CD8-positive, alpha-beta T cell (primary cell): ENCODE measurements at regions of chr19 and their contacts with region 1.

Region 1: DNA sequence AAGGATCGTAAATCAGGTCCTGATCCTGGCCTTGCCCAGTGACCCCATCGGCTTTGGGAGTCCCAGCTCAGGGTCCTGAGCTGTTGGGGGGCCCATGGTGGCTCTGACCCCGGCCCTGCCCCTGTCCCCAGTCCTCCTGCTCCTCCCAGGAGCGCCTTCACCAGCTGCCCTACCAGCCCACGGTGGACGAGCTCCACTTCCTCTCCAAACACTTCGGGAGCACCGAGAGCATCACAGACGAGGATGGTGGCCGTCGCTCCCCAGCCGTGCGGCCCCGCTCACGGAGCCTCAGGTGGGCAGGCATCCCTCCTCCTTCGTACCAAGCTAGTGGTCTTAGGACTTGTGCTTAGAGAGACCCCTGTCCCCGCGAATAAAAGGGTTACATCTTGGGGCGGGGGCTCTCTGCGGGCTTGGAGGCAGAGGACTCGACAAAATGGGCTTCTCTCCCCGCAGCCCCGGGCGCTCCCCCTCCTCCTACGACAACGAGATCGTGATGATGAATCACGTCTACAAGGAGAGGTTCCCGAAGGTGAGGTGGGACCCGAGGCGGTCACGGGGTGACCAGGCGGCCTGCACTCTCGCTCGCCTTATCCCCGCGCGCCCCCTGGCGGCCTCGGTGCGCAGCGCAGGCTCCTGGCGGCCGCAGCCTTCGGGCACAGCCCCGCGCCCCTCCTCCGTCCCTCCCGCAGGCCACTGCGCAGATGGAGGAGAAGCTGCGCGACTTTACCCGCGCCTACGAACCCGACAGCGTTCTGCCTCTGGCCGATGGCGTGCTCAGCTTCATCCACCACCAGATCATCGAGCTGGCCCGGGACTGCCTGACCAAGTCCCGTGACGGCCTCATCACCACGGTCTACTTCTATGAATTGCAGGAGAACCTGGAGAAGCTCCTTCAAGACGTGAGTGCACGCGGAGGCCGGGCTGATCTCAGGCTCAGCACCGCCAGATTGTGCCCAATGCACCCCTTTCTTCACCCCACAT is 9.1 kb downstream of the MAST1 start:
- DNase-seq: peak; percentile 66 to 90 (median 83)
- ATAC-seq: peak; percentile 96
- H3K4me3 ChIP-seq: peak overlapping the region; percentile 20 to 25
- H3K4me3 Mint-ChIP-seq: peak overlapping the region; percentile 22
- H3K27ac ChIP-seq: no peak overlapping the region
- H3K27ac Mint-ChIP-seq: no peak overlapping the region
- H3K4me1 ChIP-seq: peaks cover 4% of the 10 kb centered on the region
- H3K4me1 Mint-ChIP-seq: peaks cover 3% of the 10 kb centered on the region
- H3K27me3 ChIP-seq: peaks cover 0 to 9% of the 10 kb centered on the region in 2 experiments
- H3K27me3 Mint-ChIP-seq: peaks cover 37% of the 10 kb centered on the region
- CTCF ChIP-seq: peak; percentile 99

Region 2: DNA sequence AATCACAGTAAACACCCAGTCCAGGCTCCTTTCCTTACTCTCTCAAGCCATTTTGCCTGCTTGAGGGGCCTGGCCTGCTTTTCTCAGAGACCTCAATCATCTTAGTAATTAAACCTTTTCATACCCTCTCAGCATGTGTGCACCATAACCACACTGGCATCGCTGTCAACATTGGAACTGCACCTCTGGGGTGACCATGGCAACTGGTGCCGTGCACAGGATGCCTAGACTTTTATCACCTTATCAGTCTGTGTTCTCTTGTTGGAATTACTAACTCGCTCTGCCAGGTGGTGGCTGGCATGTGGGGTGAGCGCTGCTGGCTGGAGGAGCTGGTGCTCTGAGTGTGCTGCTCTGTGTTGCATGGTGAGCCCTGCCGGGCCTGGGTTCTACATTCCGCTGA is 345.3 kb before region 1 on chr19:
- CTCF ChIA-PET with region 1: no interaction called
- POLR2A ChIA-PET with region 1: no interaction called
- intact Hi-C with region 1: no loop called
- DNase-seq: no peak
- ATAC-seq: no peak
- H3K4me3 ChIP-seq: no peak overlapping the region
- H3K4me3 Mint-ChIP-seq: no peak overlapping the region
- H3K27ac ChIP-seq: no peak overlapping the region
- H3K27ac Mint-ChIP-seq: peak overlapping the region; percentile 14
- H3K4me1 ChIP-seq: no peaks in the 10 kb centered on the region
- H3K4me1 Mint-ChIP-seq: peaks cover under 1% of the 10 kb centered on the region
- H3K27me3 ChIP-seq: no peaks in the 10 kb centered on the region
- H3K27me3 Mint-ChIP-seq: no peaks in the 10 kb centered on the region
- CTCF ChIP-seq: no peak

Region 3: GRCh38 chr19:12757544-12758274 is 89.7 kb before region 1 on chr19:
- CTCF ChIA-PET with region 1: interaction called, 273 read pairs
- POLR2A ChIA-PET with region 1: interaction called, 3 read pairs
- intact Hi-C with region 1: loop called (anchors 1 kb)
- DNase-seq: peak; percentile 32 to 74 (median 49)
- ATAC-seq: peak; percentile 78
- H3K4me3 ChIP-seq: no peak overlapping the region
- H3K4me3 Mint-ChIP-seq: peak overlapping the region; percentile 18
- H3K27ac ChIP-seq: no peak overlapping the region
- H3K27ac Mint-ChIP-seq: no peak overlapping the region
- H3K4me1 ChIP-seq: peaks cover 7% of the 10 kb centered on the region
- H3K4me1 Mint-ChIP-seq: peaks cover 6% of the 10 kb centered on the region
- H3K27me3 ChIP-seq: peaks cover 3 to 4% of the 10 kb centered on the region in 2 experiments
- H3K27me3 Mint-ChIP-seq: peaks cover 16% of the 10 kb centered on the region
- CTCF ChIP-seq: peak; percentile 93

Region 4: GRCh38 chr19:12796146-12797071 is 51.0 kb before region 1 on chr19:
- CTCF ChIA-PET with region 1: interaction called, 49 read pairs
- POLR2A ChIA-PET with region 1: interaction called, 3 read pairs
- intact Hi-C with region 1: loop called in 1 of 2 experiments (anchors 1 kb)
- DNase-seq: peak; percentile 46 to 88 (median 78)
- ATAC-seq: peak; percentile 6
- H3K4me3 ChIP-seq: peak overlapping the region; percentile 5 to 25
- H3K4me3 Mint-ChIP-seq: peak overlapping the region; percentile 70
- H3K27ac ChIP-seq: peak overlapping the region in 1 of 2 experiments; percentile 36
- H3K27ac Mint-ChIP-seq: peak overlapping the region; percentile 89
- H3K4me1 ChIP-seq: peaks cover 36% of the 10 kb centered on the region
- H3K4me1 Mint-ChIP-seq: peaks cover 38% of the 10 kb centered on the region
- H3K27me3 ChIP-seq: no peaks in the 10 kb centered on the region
- H3K27me3 Mint-ChIP-seq: no peaks in the 10 kb centered on the region
- CTCF ChIP-seq: peak; percentile 86

Region 5: DNA sequence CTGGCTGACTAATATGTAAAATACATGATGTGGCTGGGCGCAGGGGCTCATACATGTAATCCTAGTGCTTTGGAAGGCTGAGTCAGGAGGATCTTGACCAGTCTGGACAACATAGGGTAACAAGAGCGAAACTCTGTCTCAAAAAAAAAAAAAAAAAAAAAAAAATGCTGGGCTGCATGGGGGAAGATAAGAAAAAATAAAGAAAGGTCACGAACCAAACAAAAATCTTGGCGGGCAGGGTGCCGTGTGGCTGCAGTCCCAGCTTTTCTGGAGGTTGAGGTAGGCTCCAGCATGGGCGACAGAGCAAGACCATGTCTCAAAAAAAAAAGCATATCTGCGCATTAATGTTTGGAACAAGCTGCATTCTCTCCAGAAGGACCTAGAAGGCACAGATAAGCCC is 32.4 kb before region 1 on chr19:
- CTCF ChIA-PET with region 1: interaction called, 13 read pairs
- POLR2A ChIA-PET with region 1: no interaction called
- intact Hi-C with region 1: no loop called
- DNase-seq: no peak
- ATAC-seq: no peak
- H3K4me3 ChIP-seq: no peak overlapping the region
- H3K4me3 Mint-ChIP-seq: no peak overlapping the region
- H3K27ac ChIP-seq: no peak overlapping the region
- H3K27ac Mint-ChIP-seq: no peak overlapping the region
- H3K4me1 ChIP-seq: no peaks in the 10 kb centered on the region
- H3K4me1 Mint-ChIP-seq: no peaks in the 10 kb centered on the region
- H3K27me3 ChIP-seq: no peaks in the 10 kb centered on the region
- H3K27me3 Mint-ChIP-seq: no peaks in the 10 kb centered on the region
- CTCF ChIP-seq: no peak

Region 6: GRCh38 chr19:12867120-12868099 is 20.0 kb after region 1 on chr19:
- CTCF ChIA-PET with region 1: interaction called, 16 read pairs
- POLR2A ChIA-PET with region 1: no interaction called
- intact Hi-C with region 1: no loop called
- DNase-seq: peak; percentile 39 to 84 (median 71)
- ATAC-seq: peak; percentile 86
- H3K4me3 ChIP-seq: peak overlapping the region; percentile 57 to 87
- H3K4me3 Mint-ChIP-seq: peak overlapping the region; percentile 86
- H3K27ac ChIP-seq: no peak overlapping the region
- H3K27ac Mint-ChIP-seq: peak overlapping the region; percentile 18
- H3K4me1 ChIP-seq: peaks cover 5% of the 10 kb centered on the region
- H3K4me1 Mint-ChIP-seq: peaks cover 9% of the 10 kb centered on the region
- H3K27me3 ChIP-seq: peaks cover 0 to 3% of the 10 kb centered on the region in 2 experiments
- H3K27me3 Mint-ChIP-seq: peaks cover 4% of the 10 kb centered on the region
- CTCF ChIP-seq: no peak

Region 7: GRCh38 chr19:13069415-13070359 is 222.2 kb after region 1 on chr19:
- CTCF ChIA-PET with region 1: no interaction called
- POLR2A ChIA-PET with region 1: no interaction called
- intact Hi-C with region 1: no loop called
- DNase-seq: no peak
- ATAC-seq: no peak
- H3K4me3 ChIP-seq: no peak overlapping the region
- H3K4me3 Mint-ChIP-seq: no peak overlapping the region
- H3K27ac ChIP-seq: no peak overlapping the region
- H3K27ac Mint-ChIP-seq: no peak overlapping the region
- H3K4me1 ChIP-seq: no peaks in the 10 kb centered on the region
- H3K4me1 Mint-ChIP-seq: no peaks in the 10 kb centered on the region
- H3K27me3 ChIP-seq: no peaks in the 10 kb centered on the region
- H3K27me3 Mint-ChIP-seq: no peaks in the 10 kb centered on the region
- CTCF ChIP-seq: no peak